ENCODE measurements at regions of chr5 and their contacts with region 1.

Region 1: DNA sequence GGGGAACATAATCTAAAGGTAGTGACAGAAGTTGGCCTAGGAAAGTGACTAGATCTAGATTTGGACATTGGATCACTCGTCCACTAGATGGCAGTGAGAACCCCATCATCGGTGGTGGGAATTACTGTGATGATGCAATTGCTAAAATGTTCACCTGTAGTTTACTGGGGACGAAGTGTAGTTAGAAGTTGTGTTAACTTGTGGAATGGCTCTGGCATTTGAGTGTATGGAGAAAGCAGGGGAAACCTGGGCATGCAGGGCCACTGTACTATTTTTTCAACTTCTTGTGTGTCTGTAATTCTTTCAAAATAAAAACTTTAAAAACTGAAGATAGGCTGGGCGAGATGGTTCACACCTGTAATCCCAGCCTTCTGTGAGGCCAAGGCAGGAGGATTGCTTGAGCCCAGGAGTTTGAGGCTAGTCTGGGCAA is 75.5 kb downstream of the PHAX start:
- DNase-seq: peak; percentile 80 to 88 (median 84)
- ATAC-seq: peak; percentile 61
- H3K4me3 ChIP-seq: no peak overlapping the region
- H3K27ac ChIP-seq: no peak overlapping the region; the same call in 2 of the 3 replicates
- H3K4me1 ChIP-seq: peaks cover 19 to 34% of the 10 kb centered on the region in 2 experiments
- H3K27me3 ChIP-seq: no peaks in the 10 kb centered on the region
- CTCF ChIP-seq: peak; percentile 80 to 95 (median 83)
- EP300 ChIP-seq: 0 out of 2 replicates have a peak, but pooled peaks have one; percentile 61
- POLR2A ChIP-seq: no peak
- RAD21 ChIP-seq: peak; percentile 96 to 99

Region 2: DNA sequence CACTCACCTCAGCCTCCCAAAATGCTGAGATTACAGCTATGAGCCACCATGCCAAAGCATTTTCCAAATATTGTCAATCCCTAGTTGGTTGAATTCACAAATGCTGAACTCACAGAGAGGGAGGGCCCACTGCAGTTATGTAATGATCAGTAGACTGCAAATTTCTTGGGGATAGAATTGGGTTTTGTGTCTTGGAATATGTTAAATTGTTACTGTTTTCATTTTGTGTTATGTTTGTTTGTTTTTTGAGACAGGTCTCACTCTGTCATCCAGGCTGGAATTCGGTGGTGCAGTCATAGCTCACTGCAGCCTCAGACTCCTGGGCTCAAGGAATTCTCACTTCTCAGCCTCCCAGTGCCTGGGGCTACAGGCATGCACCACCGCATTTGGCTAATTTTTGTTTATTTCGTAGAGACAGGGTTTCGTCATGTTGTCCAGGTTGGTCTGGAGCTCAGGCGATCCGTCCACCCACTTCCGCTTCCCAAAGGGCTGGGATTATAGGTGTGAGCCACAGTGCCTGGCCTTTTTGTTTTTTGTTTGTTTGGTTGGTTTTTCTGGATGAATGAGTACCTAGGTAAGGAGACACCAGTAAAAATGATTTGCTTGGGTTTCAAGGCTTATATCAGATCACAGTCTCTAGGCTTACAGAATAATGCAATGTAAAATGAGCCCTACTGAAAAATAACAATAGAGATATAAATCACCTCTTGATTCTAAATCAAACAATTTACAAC is 69.2 kb after region 1 on chr5:
- CTCF ChIA-PET with region 1: no interaction called
- POLR2A ChIA-PET with region 1: no interaction called
- in situ Hi-C with region 1: no loop called
- intact Hi-C with region 1: loop called (anchors 2 kb)
- DNase-seq: no peak
- ATAC-seq: no peak
- H3K4me3 ChIP-seq: no peak overlapping the region
- H3K27ac ChIP-seq: peak overlapping the region; percentile 39; the same call in 2 of the 3 replicates
- H3K4me1 ChIP-seq: peaks cover 19 to 30% of the 10 kb centered on the region in 2 experiments
- H3K27me3 ChIP-seq: no peaks in the 10 kb centered on the region
- CTCF ChIP-seq: no peak
- EP300 ChIP-seq: no peak
- POLR2A ChIP-seq: no peak
- RAD21 ChIP-seq: no peak

Region 3: DNA sequence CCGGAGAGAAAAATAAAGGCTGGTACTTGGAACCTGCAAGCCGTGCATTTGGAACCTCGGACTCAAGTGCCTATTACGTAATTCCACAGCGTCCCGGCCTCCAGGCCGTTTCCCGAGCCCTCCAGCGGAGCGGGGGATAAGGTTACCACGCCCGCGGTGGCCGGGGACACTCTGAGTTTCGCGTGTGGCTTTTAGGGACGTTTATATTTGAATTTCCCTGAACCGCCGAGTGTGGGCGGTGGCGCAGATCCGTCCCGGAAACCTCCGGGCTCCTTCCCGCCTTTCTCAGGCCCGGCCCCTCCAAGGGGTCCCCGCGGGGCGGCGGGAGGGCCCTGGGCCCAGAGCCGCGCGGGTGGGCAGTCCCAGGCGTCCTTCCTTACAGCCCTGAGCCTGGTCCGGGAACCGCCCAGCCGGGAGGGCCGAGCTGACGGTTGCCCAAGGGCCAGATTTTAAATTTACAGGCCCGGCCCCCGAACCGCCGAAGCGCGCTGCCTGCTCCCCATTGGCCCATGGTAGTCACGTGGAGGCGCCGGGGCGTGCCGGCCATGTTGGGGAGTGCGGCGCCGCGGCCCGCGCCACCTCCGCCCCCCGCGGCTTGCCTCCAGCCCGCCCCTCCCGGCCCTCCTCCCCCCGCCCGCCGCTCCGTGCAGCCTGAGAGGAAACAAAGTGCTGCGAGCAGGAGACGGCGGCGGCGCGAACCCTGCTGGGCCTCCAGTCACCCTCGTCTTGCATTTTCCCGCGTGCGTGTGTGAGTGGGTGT is 100.5 kb after region 1 on chr5 and contains the start of gene LMNB1:
- CTCF ChIA-PET with region 1: interaction called, 53 read pairs
- POLR2A ChIA-PET with region 1: interaction called, 25 read pairs
- in situ Hi-C with region 1: loop called (anchors 5 kb)
- intact Hi-C with region 1: loop called (anchors 1 kb)
- DNase-seq: peak; percentile 94 to 97 (median 94)
- ATAC-seq: peak; percentile 83
- H3K4me3 ChIP-seq: peak within 1 kb of the TSS; percentile 93
- H3K27ac ChIP-seq: peak within 1 kb of the TSS; percentile 98
- H3K4me1 ChIP-seq: peaks cover 3 to 19% of the 10 kb centered on the region in 2 experiments; a peak in 4 of 5 replicates
- H3K27me3 ChIP-seq: no peaks in the 10 kb centered on the region
- CTCF ChIP-seq: no peak
- EP300 ChIP-seq: peak; percentile 57
- POLR2A ChIP-seq: peak; percentile 73
- RAD21 ChIP-seq: peak in 1 of 2 experiments; percentile 18; a peak in 3 of 4 replicates
- polyA plus RNA-seq, gene LMNB1: 2.8 to 7.6 TPM

Region 4: GRCh38 chr5:126801992-126802294 is 125.7 kb after region 1 on chr5:
- CTCF ChIA-PET with region 1: interaction called, 11 read pairs
- POLR2A ChIA-PET with region 1: interaction called, 4 read pairs
- in situ Hi-C with region 1: no loop called
- intact Hi-C with region 1: no loop called
- DNase-seq: no peak
- ATAC-seq: peak; percentile 60
- H3K4me3 ChIP-seq: no peak overlapping the region
- H3K27ac ChIP-seq: no peak overlapping the region
- H3K4me1 ChIP-seq: no peaks in the 10 kb centered on the region; a peak in 3 of 5 replicates
- H3K27me3 ChIP-seq: no peaks in the 10 kb centered on the region
- CTCF ChIP-seq: peak in 2 of 3 experiments; percentile 19 to 42; a peak in 2 of 6 replicates
- EP300 ChIP-seq: no peak
- POLR2A ChIP-seq: no peak
- RAD21 ChIP-seq: peak; percentile 49 to 57

Region 5: GRCh38 chr5:126808521-126808988 is 132.3 kb after region 1 on chr5:
- CTCF ChIA-PET with region 1: interaction called, 5 read pairs
- POLR2A ChIA-PET with region 1: interaction called, 3 read pairs
- in situ Hi-C with region 1: no loop called
- intact Hi-C with region 1: loop called (anchors 1 kb)
- DNase-seq: peak; percentile 22 to 31 (median 25)
- ATAC-seq: peak; percentile 80
- H3K4me3 ChIP-seq: no peak overlapping the region
- H3K27ac ChIP-seq: no peak overlapping the region
- H3K4me1 ChIP-seq: peaks cover 0 to 3% of the 10 kb centered on the region in 2 experiments; a peak in 1 of 5 replicates
- H3K27me3 ChIP-seq: no peaks in the 10 kb centered on the region
- CTCF ChIP-seq: peak; percentile 43 to 70 (median 44); a peak in 5 of 6 replicates
- EP300 ChIP-seq: no peak
- POLR2A ChIP-seq: no peak
- RAD21 ChIP-seq: peak; percentile 37 to 61

Region 6: DNA sequence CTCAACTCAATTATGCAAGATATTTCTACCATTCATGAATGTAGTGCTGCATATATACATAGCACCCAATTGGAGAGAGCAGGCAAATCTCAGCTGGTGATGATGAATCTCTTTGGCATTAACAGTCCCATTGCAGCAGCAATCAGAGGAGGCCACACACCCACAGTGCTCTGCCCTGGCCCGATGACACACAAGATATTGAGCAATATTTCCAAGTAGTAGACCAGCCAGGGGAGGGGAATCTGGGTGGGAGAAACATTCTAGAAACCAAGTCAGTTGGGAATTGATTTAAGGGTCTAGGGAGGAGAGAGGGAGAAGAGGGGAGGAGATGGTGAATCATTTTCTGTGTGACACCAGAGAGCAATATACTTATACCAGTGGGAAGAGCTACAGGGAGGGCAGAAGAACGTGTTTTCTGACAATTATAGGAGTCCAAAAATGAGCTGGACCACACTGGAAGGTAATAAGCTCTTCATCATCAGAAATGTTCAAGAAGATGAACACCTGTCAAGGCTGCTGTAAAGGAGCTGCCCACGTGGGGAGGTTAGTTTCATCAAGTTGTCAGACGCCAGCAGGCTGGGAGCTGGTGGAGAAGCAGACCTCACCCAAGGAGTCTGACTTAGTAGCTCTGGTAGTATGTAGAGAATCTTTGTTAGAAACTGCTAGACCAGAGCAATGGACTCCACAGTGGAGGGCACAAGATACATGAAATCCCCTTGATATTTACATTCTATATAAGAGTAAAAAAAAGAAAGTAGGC is 412.2 kb after region 1 on chr5:
- CTCF ChIA-PET with region 1: no interaction called
- POLR2A ChIA-PET with region 1: no interaction called
- in situ Hi-C with region 1: no loop called
- intact Hi-C with region 1: loop called (anchors 10 kb)
- DNase-seq: no peak
- ATAC-seq: no peak
- H3K4me3 ChIP-seq: no peak overlapping the region
- H3K27ac ChIP-seq: no peak overlapping the region
- H3K4me1 ChIP-seq: peaks cover 0 to 9% of the 10 kb centered on the region in 2 experiments; a peak in 1 of 5 replicates
- H3K27me3 ChIP-seq: peaks cover 2 to 4% of the 10 kb centered on the region in 2 experiments; a peak in 3 of 5 replicates
- CTCF ChIP-seq: no peak
- EP300 ChIP-seq: no peak
- POLR2A ChIP-seq: no peak
- RAD21 ChIP-seq: no peak

Measured in K562 (cell line).